Transverse colon (tissue), 4 donors: ENCODE measurements at regions of chr10 and their contacts with region 1.

Region 1: GRCh38 chr10:88659725-88660597 is 4.3 kb upstream of the LIPF start:
- DNase-seq: no peak
- H3K4me3 ChIP-seq: no peak overlapping the region
- H3K27ac ChIP-seq: no peak overlapping the region
- H3K4me1 ChIP-seq: peaks cover 0 to 5% (median 0%) of the 10 kb centered on the region in 4 donors
- H3K27me3 ChIP-seq: no peaks in the 10 kb centered on the region
- CTCF ChIP-seq: no peak
- EP300 ChIP-seq: no peak
- POLR2A ChIP-seq: no peak

Region 2: DNA sequence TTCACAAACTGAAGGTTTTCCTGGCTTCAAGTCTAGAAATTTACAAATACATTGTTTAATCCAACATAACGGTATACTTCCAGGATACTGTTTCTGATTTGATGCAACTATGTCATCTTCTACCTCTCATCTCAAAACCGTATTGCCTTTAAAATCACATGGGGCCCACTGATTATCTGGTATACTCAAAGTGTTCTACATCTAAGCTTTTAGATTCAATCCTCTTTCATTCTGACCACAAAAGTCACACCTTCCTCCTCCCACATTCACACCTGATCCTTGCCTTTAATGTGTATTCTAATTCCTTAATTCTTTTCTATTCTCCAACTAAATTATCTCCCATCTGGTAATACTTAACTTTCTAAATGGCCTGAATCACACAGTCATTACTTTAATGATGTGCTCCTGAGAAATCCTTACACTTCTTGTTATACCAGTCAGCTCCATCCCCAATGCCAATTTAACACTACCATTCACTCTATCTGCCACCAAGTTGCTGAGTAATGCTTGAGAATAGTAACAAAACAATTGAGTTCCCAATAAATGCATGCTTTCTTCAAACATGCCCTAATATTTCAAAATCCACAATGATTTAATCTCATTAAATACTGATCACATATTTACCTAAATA is 854.9 kb before region 1 on chr10:
- in situ Hi-C with region 1: no loop called
- intact Hi-C with region 1: loop called (anchors 10 kb)
- DNase-seq: no peak
- H3K4me3 ChIP-seq: no peak overlapping the region
- H3K27ac ChIP-seq: no peak overlapping the region
- H3K4me1 ChIP-seq: no peaks in the 10 kb centered on the region
- H3K27me3 ChIP-seq: no peaks in the 10 kb centered on the region
- CTCF ChIP-seq: no peak
- EP300 ChIP-seq: no peak
- POLR2A ChIP-seq: no peak

Region 3: GRCh38 chr10:88800152-88801125 is 140.5 kb after region 1 on chr10:
- in situ Hi-C with region 1: no loop called
- intact Hi-C with region 1: no loop called
- DNase-seq: no peak
- H3K4me3 ChIP-seq: no peak overlapping the region
- H3K27ac ChIP-seq: no peak overlapping the region
- H3K4me1 ChIP-seq: peaks cover 0 to 3% (median 0%) of the 10 kb centered on the region in 4 donors
- H3K27me3 ChIP-seq: no peaks in the 10 kb centered on the region
- CTCF ChIP-seq: no peak
- EP300 ChIP-seq: no peak
- POLR2A ChIP-seq: no peak